ENCODE measurements at regions of chr19 and their contacts with region 1.

Region 1: GRCh38 chr19:31625575-31625974 is 276.3 kb upstream of the TSHZ3 start:
- DNase-seq: no peak
- ATAC-seq: no peak
- H3K4me3 Mint-ChIP-seq: no peak overlapping the region
- H3K27ac Mint-ChIP-seq: no peak overlapping the region
- H3K4me1 Mint-ChIP-seq: peaks cover 17% of the 10 kb centered on the region
- H3K27me3 Mint-ChIP-seq: no peaks in the 10 kb centered on the region
- CTCF ChIP-seq: no peak

Region 2: GRCh38 chr19:31347354-31347753 is 278.2 kb before region 1 on chr19:
- CTCF ChIA-PET with region 1: no interaction called
- POLR2A ChIA-PET with region 1: interaction called, 11 read pairs
- DNase-seq: no peak
- ATAC-seq: no peak
- H3K4me3 Mint-ChIP-seq: peak overlapping the region; percentile 91
- H3K27ac Mint-ChIP-seq: no peak overlapping the region
- H3K4me1 Mint-ChIP-seq: peaks cover 64% of the 10 kb centered on the region
- H3K27me3 Mint-ChIP-seq: peaks cover 24% of the 10 kb centered on the region
- CTCF ChIP-seq: no peak

Region 3: GRCh38 chr19:31553113-31553845 is 72.3 kb before region 1 on chr19:
- CTCF ChIA-PET with region 1: no interaction called
- POLR2A ChIA-PET with region 1: no interaction called
- DNase-seq: no peak
- ATAC-seq: no peak
- H3K4me3 Mint-ChIP-seq: no peak overlapping the region
- H3K27ac Mint-ChIP-seq: no peak overlapping the region
- H3K4me1 Mint-ChIP-seq: peaks cover 23% of the 10 kb centered on the region
- H3K27me3 Mint-ChIP-seq: no peaks in the 10 kb centered on the region; the same call in none of the 2 replicates
- CTCF ChIP-seq: no peak

Measured in WTC11 (cell line).